Left cardiac atrium (tissue), 4 donors: ENCODE measurements at regions of chr7 and their contacts with region 1.

Region 1: DNA sequence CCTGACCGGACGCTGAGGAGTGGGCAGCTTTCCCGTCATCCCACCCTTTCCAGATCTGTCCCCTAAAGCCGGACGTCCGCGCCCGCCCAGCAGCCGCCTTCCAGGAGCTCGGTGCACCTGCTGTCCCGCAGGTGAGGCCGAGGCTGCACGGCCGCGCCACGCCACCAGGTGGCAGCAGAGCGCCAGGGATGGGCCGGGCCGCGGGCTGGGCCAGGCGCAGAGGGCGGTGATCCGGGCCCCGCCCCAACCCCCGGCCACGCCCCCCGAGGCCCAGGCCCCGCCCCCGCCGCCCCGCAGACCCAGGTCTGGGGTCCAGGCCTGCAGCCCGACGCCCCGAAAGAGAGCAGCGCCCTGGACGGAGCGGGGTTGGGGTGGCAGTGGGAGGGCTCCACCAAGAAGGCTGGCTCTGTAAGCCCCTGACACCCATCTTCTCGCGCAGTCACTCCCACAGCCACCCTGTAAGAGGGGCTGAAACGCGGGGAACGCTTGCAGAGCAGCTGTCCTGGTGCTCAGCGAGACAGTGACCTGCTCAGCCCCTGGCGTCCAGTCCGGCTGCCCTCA is 32.2 kb downstream of the FOXL3 start:
- DNase-seq: peak; percentile 67
- ATAC-seq: peak; percentile 89 to 90

Region 2: GRCh38 chr7:636396-636795 is 314.2 kb after region 1 on chr7:
- intact Hi-C with region 1: loop called in 1 of 2 experiments (anchors 10 kb)
- DNase-seq: no peak
- ATAC-seq: peak; percentile 38 to 54

Region 3: DNA sequence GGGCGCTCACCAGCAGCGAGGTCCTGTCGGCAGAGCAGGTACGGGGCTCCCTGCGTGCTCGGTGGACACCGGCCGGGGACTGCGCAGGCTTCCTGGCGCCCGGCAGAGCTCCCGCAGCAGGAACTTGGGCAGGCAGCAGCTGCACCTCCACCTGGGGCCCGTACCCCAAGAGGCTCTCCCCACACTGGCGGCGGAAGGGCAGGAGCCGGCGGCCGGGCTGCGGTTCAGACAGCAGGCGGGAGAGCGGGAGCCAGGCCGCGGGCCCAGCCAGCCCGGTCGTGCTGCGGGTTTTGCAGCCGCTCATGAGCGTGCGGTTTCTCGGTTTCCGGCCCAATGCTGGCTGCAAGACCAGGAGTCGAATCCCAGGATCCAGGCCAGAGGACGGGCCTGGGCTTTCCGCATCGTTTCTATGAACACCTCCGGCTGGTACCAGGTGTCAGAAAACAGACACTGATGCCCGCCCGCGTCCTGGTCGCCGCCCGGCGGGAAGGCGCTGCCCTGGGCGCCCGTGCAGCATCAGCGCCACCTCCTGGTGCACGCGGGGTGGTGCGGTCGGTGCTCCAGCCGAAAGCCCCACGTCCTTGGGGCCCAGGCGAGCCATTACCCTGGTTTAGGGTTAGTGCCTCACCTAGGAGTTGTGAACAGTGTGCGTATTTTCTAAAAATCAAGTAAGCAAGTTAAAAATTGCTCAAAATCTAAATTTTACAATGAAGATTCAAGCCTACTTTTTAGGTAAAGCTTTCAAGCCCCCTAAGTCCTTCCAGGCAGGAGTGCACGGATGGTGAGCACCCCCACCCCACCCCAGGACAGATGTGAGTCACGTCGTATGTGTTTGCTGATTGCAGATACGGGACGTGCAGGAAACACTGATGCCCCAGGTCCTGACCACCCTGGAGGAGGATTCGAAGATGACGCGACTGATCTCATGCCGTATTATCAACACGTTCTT is 452.2 kb after region 1 on chr7:
- intact Hi-C with region 1: loop called (anchors 2 kb)
- DNase-seq: peak; percentile 63
- ATAC-seq: peak; percentile 36 to 38

Region 4: DNA sequence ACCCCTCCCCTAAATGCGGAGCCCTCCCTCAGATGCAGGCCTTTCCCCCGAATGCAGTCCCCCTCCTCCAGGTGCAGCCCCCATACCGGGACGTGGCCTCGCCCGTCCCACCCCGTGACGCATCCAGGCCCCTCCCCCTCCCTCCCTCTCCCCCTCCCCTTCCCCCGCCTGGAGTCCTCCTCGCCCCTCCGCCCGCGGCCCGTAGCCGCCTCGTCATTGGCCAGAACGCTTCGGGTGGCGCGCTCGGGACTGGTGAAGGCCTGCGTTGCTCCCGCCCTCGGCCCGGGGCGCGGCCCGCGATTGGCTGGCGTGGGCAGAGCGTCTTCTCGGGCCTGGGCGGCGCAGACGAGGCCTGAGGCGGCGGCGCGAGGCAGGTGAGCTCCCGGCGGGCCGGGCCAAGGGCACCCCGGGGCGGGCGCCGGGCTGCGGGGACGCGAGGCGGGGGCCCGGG is 494.1 kb after region 1 on chr7:
- intact Hi-C with region 1: no loop called
- DNase-seq: peak; percentile 98
- ATAC-seq: peak; percentile 92 to 95